AG04450 (cell line): ENCODE measurements at regions of chr6 and their contacts with region 1.

Region 1: GRCh38 chr6:56570413-56571359 is 72.0 kb downstream of the DST start:
- DNase-seq: no peak
- H3K4me3 ChIP-seq: no peak overlapping the region
- H3K27ac ChIP-seq: no peak overlapping the region
- H3K27me3 ChIP-seq: no peaks in the 10 kb centered on the region
- CTCF ChIP-seq: peak; percentile 57

Region 2: GRCh38 chr6:56314683-56315523 is 255.8 kb before region 1 on chr6:
- CTCF ChIA-PET with region 1: interaction called, 20 read pairs
- POLR2A ChIA-PET with region 1: no interaction called
- DNase-seq: no peak
- H3K4me3 ChIP-seq: no peak overlapping the region
- H3K27ac ChIP-seq: no peak overlapping the region
- H3K27me3 ChIP-seq: no peaks in the 10 kb centered on the region
- CTCF ChIP-seq: peak; percentile 86

Region 3: GRCh38 chr6:56370561-56371211 is 200.0 kb before region 1 on chr6:
- CTCF ChIA-PET with region 1: interaction called, 14 read pairs
- POLR2A ChIA-PET with region 1: no interaction called
- DNase-seq: peak; percentile 59
- H3K4me3 ChIP-seq: no peak overlapping the region
- H3K27ac ChIP-seq: peak overlapping the region; percentile 63
- H3K27me3 ChIP-seq: no peaks in the 10 kb centered on the region
- CTCF ChIP-seq: no peak

Region 4: DNA sequence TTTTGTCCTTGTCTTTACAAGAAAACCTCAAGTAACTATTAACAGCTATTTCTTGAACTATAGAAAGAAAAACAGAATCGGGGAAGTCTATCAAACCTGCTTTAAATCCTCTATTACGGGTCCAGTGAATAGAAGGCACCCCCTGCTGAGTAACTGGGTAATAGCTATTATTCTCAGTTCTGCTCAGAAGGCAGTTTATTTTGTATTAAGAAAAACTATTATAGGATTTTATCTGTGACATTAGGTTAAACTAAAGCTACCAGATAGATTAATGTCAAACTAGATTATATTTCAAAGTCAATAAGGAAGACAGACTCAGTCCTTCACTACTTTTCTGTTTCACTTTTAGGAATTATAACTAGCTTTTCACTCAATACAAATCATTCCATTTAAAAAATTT is 21.7 kb before region 1 on chr6:
- CTCF ChIA-PET with region 1: interaction called, 35 read pairs
- POLR2A ChIA-PET with region 1: no interaction called
- DNase-seq: no peak
- H3K4me3 ChIP-seq: no peak overlapping the region
- H3K27ac ChIP-seq: no peak overlapping the region
- H3K27me3 ChIP-seq: no peaks in the 10 kb centered on the region
- CTCF ChIP-seq: peak; percentile 47

Region 5: GRCh38 chr6:56555438-56555872 is 15.2 kb before region 1 on chr6:
- CTCF ChIA-PET with region 1: interaction called, 35 read pairs
- POLR2A ChIA-PET with region 1: no interaction called
- DNase-seq: no peak
- H3K4me3 ChIP-seq: no peak overlapping the region
- H3K27ac ChIP-seq: no peak overlapping the region
- H3K27me3 ChIP-seq: no peaks in the 10 kb centered on the region
- CTCF ChIP-seq: no peak

Region 6: GRCh38 chr6:56699066-56699654 is 128.5 kb after region 1 on chr6:
- CTCF ChIA-PET with region 1: no interaction called
- POLR2A ChIA-PET with region 1: no interaction called
- DNase-seq: no peak
- H3K4me3 ChIP-seq: no peak overlapping the region
- H3K27ac ChIP-seq: no peak overlapping the region
- H3K27me3 ChIP-seq: no peaks in the 10 kb centered on the region
- CTCF ChIP-seq: peak; percentile 52

Region 7: DNA sequence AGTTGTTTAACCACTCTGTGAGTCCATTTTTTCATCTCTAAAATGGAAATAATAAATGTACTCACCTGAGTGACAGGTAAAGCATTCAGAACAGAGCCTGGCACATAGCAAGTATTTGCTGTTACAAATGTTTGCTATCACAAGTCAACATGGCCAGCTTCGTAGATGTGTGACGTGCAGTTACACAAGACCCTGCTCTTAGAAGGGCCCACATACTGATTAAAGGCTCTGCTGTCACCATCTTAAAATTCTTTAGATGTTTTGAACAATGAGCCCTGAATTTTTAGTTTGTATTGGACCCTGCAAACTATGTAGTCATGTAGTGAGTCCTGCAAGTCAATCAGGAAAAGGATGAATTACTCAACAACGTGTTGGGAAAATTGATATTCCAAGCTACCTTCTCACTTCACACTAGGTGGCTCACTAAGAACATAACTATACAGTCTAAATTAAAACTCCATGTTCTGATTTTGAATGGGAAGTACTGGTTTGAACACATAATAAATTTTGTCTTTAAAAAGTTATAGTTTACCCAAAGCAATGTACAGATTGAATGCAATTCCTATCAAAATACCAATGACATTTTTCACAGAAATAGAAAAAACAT is 435.5 kb after region 1 on chr6:
- CTCF ChIA-PET with region 1: no interaction called
- POLR2A ChIA-PET with region 1: no interaction called
- DNase-seq: no peak
- H3K4me3 ChIP-seq: no peak overlapping the region
- H3K27ac ChIP-seq: no peak overlapping the region
- H3K27me3 ChIP-seq: no peaks in the 10 kb centered on the region
- CTCF ChIP-seq: no peak